PC-9 (cell line): ENCODE measurements at regions of chr7 and their contacts with region 1.

Region 1: GRCh38 chr7:1555809-1556540 is at the start of gene TMEM184A:
- DNase-seq: peak; percentile 98 to 100
- H3K4me3 ChIP-seq: peak within 1 kb of the TSS; percentile 65
- H3K27ac ChIP-seq: peak within 1 kb of the TSS; percentile 96
- H3K4me1 ChIP-seq: peaks cover 62% of the 10 kb centered on the region
- H3K27me3 ChIP-seq: no peaks in the 10 kb centered on the region
- CTCF ChIP-seq: peak; percentile 80
- total RNA-seq, gene TMEM184A: 21.4 TPM in 2 replicates

Region 2: GRCh38 chr7:1004018-1004852 is 551.7 kb before region 1 on chr7:
- CTCF ChIA-PET with region 1: no interaction called
- POLR2A ChIA-PET with region 1: no interaction called
- intact Hi-C with region 1: no loop called
- DNase-seq: no peak
- H3K4me3 ChIP-seq: no peak overlapping the region
- H3K27ac ChIP-seq: no peak overlapping the region
- H3K4me1 ChIP-seq: no peaks in the 10 kb centered on the region
- H3K27me3 ChIP-seq: no peaks in the 10 kb centered on the region
- CTCF ChIP-seq: no peak

Region 3: DNA sequence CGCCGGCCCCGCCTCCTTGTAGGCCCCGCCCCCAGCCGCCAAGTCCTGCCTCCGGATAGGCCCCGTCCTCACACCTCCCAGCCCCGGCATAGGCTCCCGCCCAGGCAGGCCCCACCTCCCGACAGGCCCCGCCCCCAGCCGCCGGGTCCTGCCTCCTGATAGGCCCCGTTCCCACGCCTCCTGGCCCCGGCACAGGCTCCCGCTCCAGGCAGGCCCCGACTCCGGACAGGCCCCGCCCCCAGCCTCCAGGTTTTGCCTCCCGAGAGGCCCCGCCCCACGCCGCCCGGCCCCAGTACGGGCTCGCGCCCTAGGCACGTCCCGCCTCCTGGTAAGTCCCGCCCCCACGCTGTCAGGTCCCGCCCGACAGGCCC is 96.5 kb before region 1 on chr7:
- CTCF ChIA-PET with region 1: no interaction called
- POLR2A ChIA-PET with region 1: interaction called, 3 read pairs
- intact Hi-C with region 1: loop called (anchors 1 kb)
- DNase-seq: peak; percentile 92 to 100
- H3K4me3 ChIP-seq: peak overlapping the region; percentile 97; the same call in 1 of the 2 replicates
- H3K27ac ChIP-seq: no peak overlapping the region
- H3K4me1 ChIP-seq: peaks cover 39% of the 10 kb centered on the region
- H3K27me3 ChIP-seq: no peaks in the 10 kb centered on the region
- CTCF ChIP-seq: no peak

Region 4: GRCh38 chr7:1520574-1521234 is 35.3 kb before region 1 on chr7:
- CTCF ChIA-PET with region 1: no interaction called
- POLR2A ChIA-PET with region 1: no interaction called
- intact Hi-C with region 1: loop called (anchors 1 kb)
- DNase-seq: peak; percentile 97 to 100
- H3K4me3 ChIP-seq: peak overlapping the region; percentile 16; the same call in 1 of the 2 replicates
- H3K27ac ChIP-seq: peak overlapping the region; percentile 89
- H3K4me1 ChIP-seq: peaks cover 29% of the 10 kb centered on the region
- H3K27me3 ChIP-seq: no peaks in the 10 kb centered on the region
- CTCF ChIP-seq: no peak

Region 5: DNA sequence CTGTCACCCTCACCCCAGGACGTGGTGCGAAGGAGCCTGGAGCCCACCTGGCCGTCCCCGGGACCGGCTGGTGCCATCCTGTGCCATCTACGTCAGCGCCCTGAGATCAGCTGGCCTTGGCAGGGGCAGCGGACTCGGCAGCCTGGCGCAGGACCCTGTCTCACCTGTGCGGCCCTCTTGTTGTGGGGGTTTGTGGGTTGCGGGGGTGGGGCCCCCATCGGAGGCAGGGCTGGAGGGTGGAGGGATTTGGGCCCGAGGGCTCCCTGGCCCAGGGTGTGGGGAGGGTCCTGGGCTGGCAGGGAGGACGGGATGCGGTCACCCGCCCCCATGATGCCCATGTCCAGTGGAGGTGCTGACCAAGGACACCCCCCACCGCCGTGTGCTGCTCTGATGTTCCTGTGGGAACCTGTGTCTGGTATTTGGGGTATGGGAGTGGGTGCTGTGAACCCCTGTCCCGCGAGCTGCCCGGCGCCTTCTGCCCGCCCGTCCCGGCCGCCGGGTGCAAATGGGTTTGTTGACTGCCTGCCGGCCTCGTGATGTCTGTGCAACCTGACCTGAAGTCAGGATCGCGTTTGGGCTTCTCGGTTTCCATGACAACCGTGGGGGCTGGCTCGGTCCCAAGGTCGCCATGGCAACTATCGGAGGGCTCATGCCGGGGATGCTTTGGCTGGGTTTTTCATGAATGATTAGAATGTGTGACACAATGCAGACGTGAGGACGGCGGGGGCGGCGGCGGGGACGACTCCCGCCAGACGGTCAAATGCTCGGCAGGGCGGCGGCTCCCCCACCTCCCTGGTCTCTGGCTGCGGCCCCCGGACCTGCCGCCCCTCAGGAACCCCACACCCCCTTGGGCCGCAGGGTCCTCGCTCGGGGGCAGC is 18.2 kb before region 1 on chr7:
- CTCF ChIA-PET with region 1: interaction called, 7 read pairs
- POLR2A ChIA-PET with region 1: interaction called, 13 read pairs
- intact Hi-C with region 1: loop called (anchors 1 kb)
- DNase-seq: peak in 1 of 2 experiments; percentile 89
- H3K4me3 ChIP-seq: peak overlapping the region; percentile 53
- H3K27ac ChIP-seq: peak overlapping the region; percentile 69
- H3K4me1 ChIP-seq: peaks cover 47% of the 10 kb centered on the region
- H3K27me3 ChIP-seq: no peaks in the 10 kb centered on the region
- CTCF ChIP-seq: no peak

Region 6: DNA sequence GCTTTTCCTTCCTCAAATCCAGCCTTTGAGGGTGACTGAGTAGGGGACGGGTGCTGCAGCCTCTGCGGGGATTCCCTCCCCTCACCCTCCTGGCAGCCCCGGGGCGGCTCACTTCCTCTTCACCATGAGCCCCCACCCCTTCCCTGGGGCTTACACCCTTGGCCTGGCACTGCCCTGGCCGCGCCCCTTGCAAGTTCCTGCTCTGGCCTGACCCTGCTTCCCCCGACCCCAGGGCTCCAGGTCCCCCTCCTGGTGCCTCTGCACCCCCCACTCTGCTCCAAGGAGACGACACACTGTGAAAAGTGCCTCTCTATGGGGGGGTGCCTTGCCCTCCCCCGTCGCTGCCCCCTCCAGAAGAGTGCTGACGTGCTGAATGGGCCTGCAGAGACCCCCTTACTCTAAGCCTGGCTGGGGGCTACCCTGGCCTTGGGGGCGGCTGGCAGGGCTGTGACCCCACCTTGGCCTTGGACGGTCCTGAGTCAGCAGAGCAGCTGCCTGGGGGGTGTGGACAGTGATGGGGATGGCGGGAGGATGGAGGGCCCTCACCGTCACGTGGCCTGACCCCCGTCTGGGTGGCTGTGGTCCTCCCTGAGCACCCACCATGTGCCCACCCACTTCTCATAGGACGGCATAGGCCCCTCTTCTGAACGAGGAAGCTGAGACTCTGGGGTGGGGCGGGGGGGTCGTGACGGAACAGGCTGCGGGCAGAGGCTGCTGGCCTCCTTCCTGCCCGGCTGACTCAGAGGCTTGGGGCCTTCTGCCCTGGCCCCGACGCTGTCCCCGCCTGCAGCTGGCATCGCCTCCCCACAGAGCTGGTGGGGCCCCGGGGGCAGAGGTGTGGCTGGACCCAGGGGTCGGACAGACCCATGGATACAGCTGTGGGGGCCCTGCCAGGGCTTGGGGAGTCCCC is 973.4 kb after region 1 on chr7:
- CTCF ChIA-PET with region 1: no interaction called
- POLR2A ChIA-PET with region 1: interaction called, 14 read pairs
- intact Hi-C with region 1: no loop called
- DNase-seq: peak; percentile 71 to 86
- H3K4me3 ChIP-seq: no peak overlapping the region; the same call in 1 of the 2 replicates
- H3K27ac ChIP-seq: peak overlapping the region; percentile 64
- H3K4me1 ChIP-seq: peaks cover 72% of the 10 kb centered on the region
- H3K27me3 ChIP-seq: no peaks in the 10 kb centered on the region
- CTCF ChIP-seq: no peak